Activated CD4-positive, alpha-beta memory T cell treated with anti-CD3 and anti-CD28 coated beads for 36 hours (primary cell): ENCODE measurements at regions of chrX and their contacts with region 1.

Region 1: DNA sequence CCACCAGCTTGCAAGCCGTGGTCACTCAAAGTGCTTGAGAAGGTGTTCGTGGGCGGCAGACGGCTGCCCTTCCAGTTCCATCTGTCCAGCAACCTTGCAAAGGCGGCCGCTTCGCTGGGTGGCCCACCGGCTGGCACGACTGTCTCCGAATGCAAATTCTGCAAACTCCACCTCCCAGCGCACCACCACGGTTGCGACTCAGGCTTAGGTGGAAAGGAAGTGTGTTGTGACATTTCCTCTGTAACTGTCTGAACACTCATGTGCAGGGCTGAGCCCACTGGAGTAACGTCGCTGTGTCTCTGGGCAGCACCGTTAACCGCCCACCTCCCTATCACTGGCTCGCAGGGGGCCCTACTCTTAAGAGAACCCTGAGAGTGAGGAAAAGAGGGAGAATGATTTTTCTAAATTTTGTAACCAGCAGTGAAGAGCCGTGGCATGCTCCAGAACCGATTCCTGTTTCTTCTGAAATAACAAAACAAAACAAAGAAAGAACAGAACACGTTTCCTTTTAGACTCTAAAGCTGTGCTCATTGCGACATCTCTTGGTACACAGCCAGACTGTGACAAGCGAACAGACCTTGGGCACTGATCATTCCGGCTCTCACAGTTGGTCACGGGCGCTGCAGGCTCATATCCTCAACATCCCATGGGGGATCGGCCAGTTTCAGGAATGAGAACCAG is at the start of gene P2RY8:
- DNase-seq: peak; percentile 90
- H3K4me3 Mint-ChIP-seq: peak within 1 kb of the TSS; percentile 94
- H3K27ac Mint-ChIP-seq: peak within 1 kb of the TSS; percentile 99
- H3K4me1 Mint-ChIP-seq: peaks cover 15% of the 10 kb centered on the region
- H3K27me3 Mint-ChIP-seq: no peaks in the 10 kb centered on the region
- total RNA-seq, gene P2RY8: 30.2 to 32.7 TPM

Region 2: GRCh38 chrX:1323315-1323714 is 213.9 kb before region 1 on chrX:
- CTCF ChIA-PET with region 1: no interaction called
- POLR2A ChIA-PET with region 1: no interaction called
- intact Hi-C with region 1: loop called (anchors 5 kb)
- DNase-seq: peak; percentile 82
- H3K4me3 Mint-ChIP-seq: no peak overlapping the region
- H3K27ac Mint-ChIP-seq: peak overlapping the region; percentile 9
- H3K4me1 Mint-ChIP-seq: peaks cover 15% of the 10 kb centered on the region
- H3K27me3 Mint-ChIP-seq: peaks cover 11% of the 10 kb centered on the region

Region 3: GRCh38 chrX:1462596-1463251 is 74.5 kb before region 1 on chrX:
- CTCF ChIA-PET with region 1: no interaction called
- POLR2A ChIA-PET with region 1: no interaction called
- intact Hi-C with region 1: loop called (anchors 1 kb)
- DNase-seq: peak; percentile 89
- H3K4me3 Mint-ChIP-seq: peak overlapping the region; percentile 61
- H3K27ac Mint-ChIP-seq: peak overlapping the region; percentile 96
- H3K4me1 Mint-ChIP-seq: peaks cover 60% of the 10 kb centered on the region
- H3K27me3 Mint-ChIP-seq: no peaks in the 10 kb centered on the region

Region 4: DNA sequence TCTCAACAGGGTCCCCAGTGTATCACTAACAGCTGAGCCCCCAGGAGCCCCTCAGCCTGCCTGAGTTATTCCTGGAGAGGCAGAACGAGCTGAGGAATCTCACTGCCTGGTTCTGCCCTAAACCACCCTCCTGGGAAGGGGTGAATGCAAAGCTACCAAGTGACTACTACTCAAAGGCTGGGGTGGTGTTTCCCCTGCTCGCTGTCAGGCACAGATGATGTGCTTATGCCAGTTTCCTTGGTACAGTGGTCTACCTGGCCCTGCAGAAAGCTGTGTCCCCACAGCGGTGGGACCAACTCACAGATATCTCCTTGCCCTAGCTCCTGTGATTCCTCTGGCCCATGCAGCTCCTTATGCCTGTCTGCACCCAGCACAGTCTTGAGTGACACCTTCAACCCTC is 49.0 kb before region 1 on chrX:
- CTCF ChIA-PET with region 1: no interaction called
- POLR2A ChIA-PET with region 1: no interaction called
- intact Hi-C with region 1: no loop called
- DNase-seq: peak; percentile 8
- H3K4me3 Mint-ChIP-seq: no peak overlapping the region
- H3K27ac Mint-ChIP-seq: peak overlapping the region; percentile 40
- H3K4me1 Mint-ChIP-seq: peaks cover 30% of the 10 kb centered on the region
- H3K27me3 Mint-ChIP-seq: no peaks in the 10 kb centered on the region

Region 5: GRCh38 chrX:1500701-1501624 is 36.2 kb before region 1 on chrX:
- CTCF ChIA-PET with region 1: no interaction called
- POLR2A ChIA-PET with region 1: no interaction called
- intact Hi-C with region 1: loop called (anchors 1 kb)
- DNase-seq: peak; percentile 47
- H3K4me3 Mint-ChIP-seq: peak overlapping the region; percentile 16
- H3K27ac Mint-ChIP-seq: peak overlapping the region; percentile 77
- H3K4me1 Mint-ChIP-seq: peaks cover 27% of the 10 kb centered on the region
- H3K27me3 Mint-ChIP-seq: no peaks in the 10 kb centered on the region

Region 6: DNA sequence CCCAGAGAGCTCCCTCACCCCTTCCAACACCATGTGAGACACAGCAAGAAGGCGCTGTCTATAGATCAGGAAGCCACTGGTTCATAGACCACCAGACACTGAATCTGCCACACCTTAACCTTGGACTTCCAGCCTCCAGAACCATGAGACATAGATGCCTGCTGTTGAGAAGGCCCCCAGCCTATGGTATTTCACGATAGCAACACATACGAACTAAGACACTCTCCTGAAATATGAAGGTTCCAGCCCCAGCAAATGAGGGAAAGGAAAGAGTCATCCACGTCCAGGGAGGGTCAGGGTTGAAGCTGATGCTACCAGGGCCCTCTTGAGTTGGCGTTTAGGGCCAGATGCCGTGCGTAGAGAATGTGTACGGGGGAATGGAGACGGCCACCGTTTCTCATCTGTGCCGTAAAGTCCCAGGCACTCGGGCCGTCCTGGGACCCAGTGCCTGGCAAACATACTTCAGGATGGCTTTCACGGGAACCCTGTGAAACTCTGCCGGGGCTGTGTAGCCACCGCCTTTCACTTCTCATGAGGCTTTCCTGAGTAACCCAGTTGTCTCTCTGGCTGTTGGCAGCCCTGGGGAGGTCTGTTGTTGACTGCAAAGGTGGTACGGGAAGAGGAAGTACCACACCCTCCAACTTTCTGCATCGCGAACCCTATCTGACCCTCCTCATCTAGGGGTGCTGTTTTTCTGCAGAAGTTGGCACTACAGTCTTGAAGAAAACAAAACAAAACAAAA is 17.5 kb after region 1 on chrX:
- CTCF ChIA-PET with region 1: no interaction called
- POLR2A ChIA-PET with region 1: no interaction called
- intact Hi-C with region 1: loop called (anchors 2 kb)
- DNase-seq: peak; percentile 55
- H3K4me3 Mint-ChIP-seq: peak overlapping the region; percentile 50
- H3K27ac Mint-ChIP-seq: peak overlapping the region; percentile 87
- H3K4me1 Mint-ChIP-seq: peaks cover 45% of the 10 kb centered on the region
- H3K27me3 Mint-ChIP-seq: no peaks in the 10 kb centered on the region

Region 7: GRCh38 chrX:2707334-2707760 is 1170.2 kb after region 1 on chrX:
- CTCF ChIA-PET with region 1: no interaction called
- POLR2A ChIA-PET with region 1: no interaction called
- intact Hi-C with region 1: loop called (anchors 5 kb)
- DNase-seq: peak; percentile 88
- H3K4me3 Mint-ChIP-seq: peak overlapping the region; percentile 45
- H3K27ac Mint-ChIP-seq: peak overlapping the region; percentile 96
- H3K4me1 Mint-ChIP-seq: peaks cover 90% of the 10 kb centered on the region
- H3K27me3 Mint-ChIP-seq: no peaks in the 10 kb centered on the region